ENCODE measurements at regions of chr1 and their contacts with region 1.

Region 1: DNA sequence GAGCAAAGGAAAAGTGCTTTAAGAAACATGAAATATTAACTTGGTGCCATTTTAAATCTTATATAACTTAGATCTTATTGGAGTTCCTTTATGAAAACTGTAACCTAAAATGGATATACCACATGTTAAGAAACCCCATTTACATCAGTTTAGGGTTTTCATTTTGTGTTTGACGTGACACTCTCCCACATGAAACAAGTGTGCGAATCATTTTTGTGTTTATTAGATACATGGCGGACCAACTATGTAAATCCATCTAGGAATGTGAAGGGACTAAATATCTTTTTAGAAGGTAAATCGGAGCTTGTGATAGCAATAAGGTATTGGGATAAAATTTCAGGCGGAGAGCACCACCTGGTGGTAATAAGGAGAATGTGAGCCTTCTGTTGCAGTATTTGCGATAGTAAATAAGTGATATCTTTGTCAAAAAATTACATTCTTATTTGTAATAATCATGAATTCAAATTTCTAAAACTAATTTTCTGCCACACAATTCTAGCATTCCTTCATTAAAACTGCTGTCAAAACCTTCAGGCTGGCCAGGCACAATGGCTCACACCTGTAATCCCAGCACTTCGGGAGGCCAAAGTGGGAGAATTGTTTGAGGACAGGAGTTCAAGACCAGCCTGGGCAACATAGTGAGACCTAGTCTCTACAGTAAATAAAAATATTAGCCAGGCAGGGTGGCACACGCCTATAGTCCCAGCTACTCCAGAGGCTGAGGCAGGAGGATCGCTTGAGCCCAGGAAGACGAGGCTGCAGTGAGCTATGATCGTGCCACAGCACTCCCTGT is 31.3 kb downstream of the SMAP2 start:
- DNase-seq: peak in 2 of 5 donors; percentile 68 to 83
- H3K4me3 ChIP-seq: no peak overlapping the region
- H3K4me3 Mint-ChIP-seq: peak overlapping the region; percentile 0 to 73 (median 64)
- H3K27ac ChIP-seq: no peak overlapping the region
- H3K27ac Mint-ChIP-seq: peak overlapping the region; percentile 50 to 99 (median 96)
- H3K4me1 ChIP-seq: peaks cover 56% of the 10 kb centered on the region
- H3K4me1 Mint-ChIP-seq: peaks cover 53 to 84% (median 83%) of the 10 kb centered on the region in 3 donors
- H3K27me3 ChIP-seq: no peaks in the 10 kb centered on the region
- H3K27me3 Mint-ChIP-seq: peaks cover 0 to 3% of the 10 kb centered on the region in 2 donors

Region 2: DNA sequence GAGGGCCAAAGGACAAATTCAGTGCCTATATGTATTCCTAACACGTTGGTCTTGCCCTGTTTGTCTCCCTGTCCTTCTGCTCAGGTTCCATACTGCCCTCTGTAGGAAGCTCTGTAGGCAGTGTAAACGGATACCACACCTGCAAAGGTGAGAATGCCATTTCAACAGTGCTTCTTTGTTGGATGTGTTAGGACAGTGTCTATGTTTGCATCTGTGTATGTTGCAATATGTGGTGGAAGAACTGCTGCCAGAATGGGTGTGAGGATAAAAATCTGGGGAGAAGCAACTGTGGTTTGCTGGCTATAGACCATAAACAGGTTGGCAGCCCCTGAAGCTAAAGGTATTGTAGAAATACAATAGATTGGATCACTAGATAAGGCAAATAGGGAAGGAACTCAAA is 1026.5 kb before region 1 on chr1:
- CTCF ChIA-PET with region 1: no interaction called
- POLR2A ChIA-PET with region 1: no interaction called
- DNase-seq: no peak
- H3K4me3 ChIP-seq: no peak overlapping the region
- H3K4me3 Mint-ChIP-seq: no peak overlapping the region
- H3K27ac ChIP-seq: no peak overlapping the region
- H3K27ac Mint-ChIP-seq: peak overlapping the region in 2 of 8 donors; percentile 42 to 58
- H3K4me1 ChIP-seq: no peaks in the 10 kb centered on the region
- H3K4me1 Mint-ChIP-seq: peaks cover 0 to 4% (median 0%) of the 10 kb centered on the region in 3 donors
- H3K27me3 ChIP-seq: no peaks in the 10 kb centered on the region
- H3K27me3 Mint-ChIP-seq: no peaks in the 10 kb centered on the region

Region 3: GRCh38 chr1:40153073-40153770 is 251.6 kb before region 1 on chr1:
- CTCF ChIA-PET with region 1: interaction called, 20 read pairs
- POLR2A ChIA-PET with region 1: no interaction called
- DNase-seq: peak in 2 of 5 donors; percentile 43 to 55
- H3K4me3 ChIP-seq: no peak overlapping the region
- H3K4me3 Mint-ChIP-seq: peak overlapping the region in 1 of 7 donors; percentile 50
- H3K27ac ChIP-seq: no peak overlapping the region
- H3K27ac Mint-ChIP-seq: peak overlapping the region in 7 of 8 donors; percentile 7 to 78 (median 62)
- H3K4me1 ChIP-seq: no peaks in the 10 kb centered on the region
- H3K4me1 Mint-ChIP-seq: peaks cover 5 to 10% (median 6%) of the 10 kb centered on the region in 3 donors
- H3K27me3 ChIP-seq: no peaks in the 10 kb centered on the region
- H3K27me3 Mint-ChIP-seq: peaks cover 3 to 5% of the 10 kb centered on the region in 2 donors

Region 4: GRCh38 chr1:40315239-40315794 is 89.5 kb before region 1 on chr1:
- CTCF ChIA-PET with region 1: interaction called, 30 read pairs
- POLR2A ChIA-PET with region 1: no interaction called
- DNase-seq: peak; percentile 72 to 88 (median 81)
- H3K4me3 ChIP-seq: peak overlapping the region; percentile 80
- H3K4me3 Mint-ChIP-seq: peak overlapping the region; percentile 84 to 93 (median 90)
- H3K27ac ChIP-seq: no peak overlapping the region
- H3K27ac Mint-ChIP-seq: peak overlapping the region in 5 of 8 donors; percentile 15 to 89 (median 84)
- H3K4me1 ChIP-seq: peaks cover 19% of the 10 kb centered on the region
- H3K4me1 Mint-ChIP-seq: peaks cover 13 to 41% (median 23%) of the 10 kb centered on the region in 3 donors
- H3K27me3 ChIP-seq: peaks cover 5% of the 10 kb centered on the region
- H3K27me3 Mint-ChIP-seq: peaks cover 8 to 18% of the 10 kb centered on the region in 2 donors

Region 5: GRCh38 chr1:40373338-40374283 is 31.3 kb before region 1 on chr1 and contains the start of gene SMAP2:
- CTCF ChIA-PET with region 1: interaction called, 20 read pairs
- POLR2A ChIA-PET with region 1: interaction called, 8 read pairs
- DNase-seq: peak; percentile 93 to 97 (median 96)
- H3K4me3 ChIP-seq: peak within 1 kb of the TSS; percentile 91
- H3K4me3 Mint-ChIP-seq: peak within 1 kb of the TSS; percentile 96 to 100 (median 99)
- H3K27ac ChIP-seq: peak within 1 kb of the TSS; percentile 97
- H3K27ac Mint-ChIP-seq: peak within 1 kb of the TSS; percentile 95 to 100 (median 98)
- H3K4me1 ChIP-seq: peaks cover 43% of the 10 kb centered on the region
- H3K4me1 Mint-ChIP-seq: peaks cover 47 to 60% (median 56%) of the 10 kb centered on the region in 3 donors
- H3K27me3 ChIP-seq: no peaks in the 10 kb centered on the region
- H3K27me3 Mint-ChIP-seq: peaks cover 0 to 9% of the 10 kb centered on the region in 2 donors
- total RNA-seq, gene SMAP2: 144 to 146 TPM

Region 6: DNA sequence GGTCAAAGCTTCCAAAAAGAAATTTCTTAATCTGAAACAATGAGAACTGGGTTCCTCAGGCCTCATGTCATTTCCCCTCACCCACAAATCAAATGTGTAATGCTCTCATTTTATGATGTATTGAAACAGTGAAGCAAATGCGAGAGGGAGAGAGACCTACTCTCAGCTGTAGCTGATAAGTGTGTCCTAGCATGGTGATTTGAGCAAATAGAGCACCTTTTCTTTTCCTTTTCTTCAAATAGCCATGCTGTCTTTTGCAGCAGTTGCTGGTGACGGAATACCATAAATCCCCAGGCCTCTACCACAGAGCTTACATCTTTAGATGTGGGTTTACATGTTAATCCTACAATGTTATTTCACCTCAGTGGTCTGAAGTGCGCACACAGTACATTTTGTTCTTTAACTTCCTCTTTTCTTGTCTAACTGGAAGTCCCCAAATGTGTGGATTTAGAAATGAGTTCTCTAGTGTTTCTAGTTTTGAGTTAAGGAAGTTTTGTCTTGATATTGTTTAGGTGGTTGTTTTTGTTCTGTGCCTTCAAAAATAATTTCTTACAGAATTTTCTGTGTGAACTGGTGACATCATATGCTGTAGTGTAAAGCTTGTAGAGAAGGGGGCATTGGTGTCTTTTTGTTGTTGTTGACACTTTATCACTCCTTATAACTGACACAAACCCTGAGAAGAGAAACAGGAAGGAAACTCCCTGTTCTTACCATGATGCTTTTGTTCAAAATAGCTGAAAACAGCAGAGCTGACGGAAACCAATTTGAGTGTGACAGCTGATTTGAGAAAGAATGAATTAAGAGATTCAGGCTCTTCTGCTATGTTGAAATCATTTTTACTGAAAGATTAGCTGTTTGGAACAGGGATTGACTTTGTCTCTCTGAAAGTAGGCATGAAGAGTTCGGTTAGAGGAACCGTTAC is 19.2 kb before region 1 on chr1:
- CTCF ChIA-PET with region 1: interaction called, 44 read pairs
- POLR2A ChIA-PET with region 1: interaction called, 6 read pairs
- DNase-seq: peak; percentile 38 to 93 (median 81)
- H3K4me3 ChIP-seq: peak overlapping the region; percentile 63
- H3K4me3 Mint-ChIP-seq: peak overlapping the region; percentile 72 to 90 (median 84)
- H3K27ac ChIP-seq: peak overlapping the region; percentile 95
- H3K27ac Mint-ChIP-seq: peak overlapping the region; percentile 90 to 100 (median 98)
- H3K4me1 ChIP-seq: peaks cover 89% of the 10 kb centered on the region
- H3K4me1 Mint-ChIP-seq: peaks cover 89 to 96% (median 95%) of the 10 kb centered on the region in 3 donors
- H3K27me3 ChIP-seq: no peaks in the 10 kb centered on the region
- H3K27me3 Mint-ChIP-seq: no peaks in the 10 kb centered on the region